Ovary (tissue), 10 donors: ENCODE measurements at regions of chr3 and their contacts with region 1.

Region 1: GRCh38 chr3:186997473-186997939 is 67.2 kb downstream of the ST6GAL1 start:
- DNase-seq: no peak
- H3K4me3 ChIP-seq: no peak overlapping the region
- H3K27ac ChIP-seq: no peak overlapping the region
- H3K4me1 ChIP-seq: no peaks in the 10 kb centered on the region
- H3K27me3 ChIP-seq: no peaks in the 10 kb centered on the region
- CTCF ChIP-seq: no peak
- EP300 ChIP-seq: no peak
- POLR2A ChIP-seq: no peak

Region 2: GRCh38 chr3:186760141-186760813 is 237.2 kb before region 1 on chr3:
- intact Hi-C with region 1: no loop called
- DNase-seq: no peak
- H3K4me3 ChIP-seq: no peak overlapping the region
- H3K27ac ChIP-seq: no peak overlapping the region
- H3K4me1 ChIP-seq: no peaks in the 10 kb centered on the region
- H3K27me3 ChIP-seq: no peaks in the 10 kb centered on the region
- CTCF ChIP-seq: no peak
- EP300 ChIP-seq: no peak
- POLR2A ChIP-seq: no peak

Region 3: DNA sequence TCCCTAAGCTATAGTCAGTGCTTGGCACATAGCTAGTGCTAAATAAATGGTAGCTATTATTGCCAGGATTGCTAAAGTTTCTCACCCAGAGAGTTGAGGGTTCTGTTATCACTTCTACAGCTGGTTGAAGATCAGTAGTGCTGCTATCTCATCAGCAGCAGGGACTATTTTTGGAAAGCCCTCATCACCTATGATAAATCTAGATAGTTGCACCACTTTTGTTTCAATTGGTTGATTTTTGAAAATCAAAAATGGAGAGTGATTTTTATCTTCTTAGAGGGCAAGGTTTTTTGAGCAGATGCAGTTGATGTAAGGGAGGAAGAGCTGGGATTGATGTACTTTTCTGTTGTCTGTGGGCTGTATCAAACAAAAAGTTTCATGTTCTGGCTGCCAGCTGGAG is 34.4 kb after region 1 on chr3:
- intact Hi-C with region 1: loop called in 1 of 4 experiments (anchors 1 kb)
- DNase-seq: no peak
- H3K4me3 ChIP-seq: no peak overlapping the region
- H3K27ac ChIP-seq: no peak overlapping the region
- H3K4me1 ChIP-seq: no peaks in the 10 kb centered on the region
- H3K27me3 ChIP-seq: no peaks in the 10 kb centered on the region
- CTCF ChIP-seq: no peak
- EP300 ChIP-seq: no peak
- POLR2A ChIP-seq: no peak